Activated naive CD8-positive, alpha-beta T cell treated with anti-CD3 and anti-CD28 coated beads, Interleukin-2, amount 10 ng/mL, durations not matched to agents 7 days and 5 days (primary cell): ENCODE measurements at regions of chr14 and their contacts with region 1.

Region 1: DNA sequence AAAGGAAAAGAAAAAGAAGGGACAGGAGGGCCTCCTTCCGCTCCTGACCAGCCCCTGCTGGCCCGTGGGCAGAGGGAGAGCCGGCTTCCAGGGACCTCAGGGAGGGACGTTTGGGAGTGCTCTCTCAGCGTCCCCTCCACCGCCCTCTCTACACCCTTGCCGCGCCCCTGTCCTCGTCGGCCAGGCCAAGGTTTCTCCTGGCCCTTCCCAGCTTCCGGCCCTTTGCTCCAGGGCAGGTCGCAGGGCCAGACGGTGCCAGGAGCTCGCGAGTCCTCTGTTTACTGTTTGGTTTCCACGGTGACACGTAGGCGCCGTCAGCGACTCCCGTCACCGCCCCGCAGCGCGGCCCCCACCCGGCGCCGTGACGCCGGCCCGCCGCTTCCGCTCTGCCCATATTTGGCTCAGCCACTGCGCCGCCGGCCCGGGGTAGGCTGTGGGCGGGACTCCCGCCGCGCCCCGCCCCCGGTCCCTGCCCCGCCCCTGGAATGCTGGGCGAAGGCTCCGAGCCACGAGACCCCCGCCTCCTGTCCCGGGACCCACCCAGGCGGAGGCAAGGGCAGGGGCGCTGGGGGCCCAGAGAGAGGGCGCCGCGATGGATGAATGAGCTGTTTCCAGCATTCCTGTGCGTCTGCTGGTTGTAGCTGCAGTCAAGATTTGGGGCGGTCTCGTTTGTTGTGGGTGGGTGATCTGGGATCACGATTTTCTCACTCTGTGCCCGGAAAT is 15.5 kb downstream of the FOS start:
- DNase-seq: peak; percentile 97
- ATAC-seq: peak; percentile 85
- H3K4me3 Mint-ChIP-seq: peak overlapping the region; percentile 88
- H3K27ac Mint-ChIP-seq: peak overlapping the region; percentile 82
- H3K4me1 Mint-ChIP-seq: peaks cover 12% of the 10 kb centered on the region
- H3K27me3 Mint-ChIP-seq: peaks cover 18% of the 10 kb centered on the region

Region 2: DNA sequence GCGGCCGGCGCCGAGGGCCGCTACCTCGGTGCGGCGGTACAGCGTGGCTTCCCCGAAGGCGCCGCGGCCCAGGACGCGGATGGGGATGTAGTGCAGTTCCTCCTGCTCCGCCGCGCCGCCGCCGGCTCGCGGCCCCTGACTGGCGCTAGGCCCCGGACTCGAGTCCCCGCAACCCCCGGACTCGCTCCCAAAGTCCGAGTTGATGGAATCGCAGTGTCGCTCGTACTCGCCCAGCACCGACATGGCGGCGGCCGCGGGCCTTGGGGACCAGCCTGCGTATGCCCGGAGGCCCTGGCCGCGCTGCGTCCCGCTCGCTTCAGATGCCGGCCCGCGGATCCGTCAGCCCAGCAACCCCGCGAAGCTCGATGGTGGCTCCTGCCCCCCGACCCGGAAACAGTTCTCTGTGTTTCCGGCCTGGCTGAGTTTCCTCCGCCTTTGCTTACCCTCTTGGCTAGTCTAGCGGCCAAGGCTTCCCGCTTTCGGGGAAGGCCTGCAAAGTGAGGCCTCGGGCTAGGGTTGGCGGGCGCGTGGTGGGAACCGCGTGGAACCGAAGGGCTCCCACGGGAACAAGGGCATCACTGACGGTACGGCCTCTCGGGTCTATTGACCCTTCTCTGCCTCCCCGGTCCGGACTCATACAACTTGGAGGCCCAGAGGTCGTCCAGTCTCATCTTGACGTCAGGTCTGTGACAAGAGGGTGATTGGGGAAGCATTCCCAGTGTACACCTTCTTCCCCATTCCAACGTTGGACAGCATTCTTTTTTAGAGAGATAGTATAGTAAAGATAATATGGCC is 167.2 kb before region 1 on chr14 and contains the start of gene NEK9:
- POLR2A ChIA-PET with region 1: interaction called, 11 read pairs
- DNase-seq: peak; percentile 90
- ATAC-seq: peak; percentile 93
- H3K4me3 Mint-ChIP-seq: peak within 1 kb of the TSS; percentile 95
- H3K27ac Mint-ChIP-seq: peak within 1 kb of the TSS; percentile 97
- H3K4me1 Mint-ChIP-seq: peaks cover 34% of the 10 kb centered on the region
- H3K27me3 Mint-ChIP-seq: no peaks in the 10 kb centered on the region
- total RNA-seq, gene NEK9: 95.2 to 104 TPM

Region 3: DNA sequence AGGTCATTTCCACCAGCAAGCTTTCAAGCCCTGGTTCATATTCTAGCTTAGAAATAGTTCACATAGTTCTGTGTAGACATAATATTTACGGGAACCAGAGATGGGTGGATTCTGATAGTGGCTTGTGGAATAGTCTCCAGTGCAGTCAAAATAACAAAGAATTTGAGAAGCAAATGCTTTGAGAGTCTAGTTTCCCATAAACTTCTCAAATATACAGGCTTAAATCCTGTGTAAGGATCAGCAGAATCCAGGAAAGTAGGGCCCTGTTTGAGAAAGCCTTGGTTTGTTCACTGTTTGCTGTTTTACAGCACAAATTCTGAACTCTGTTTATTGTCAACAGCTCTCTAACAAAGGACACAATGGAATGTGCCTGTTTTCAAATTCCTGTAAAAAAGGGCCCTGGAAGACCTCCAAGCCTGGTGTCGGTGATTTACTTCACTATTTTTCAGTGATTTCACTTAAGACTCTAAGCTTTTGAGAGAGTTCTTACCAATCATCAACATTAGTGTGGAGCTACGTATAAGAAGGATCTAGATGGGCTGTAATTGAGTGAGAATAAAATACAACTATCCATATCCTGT is 26.9 kb before region 1 on chr14:
- POLR2A ChIA-PET with region 1: no interaction called
- DNase-seq: no peak
- ATAC-seq: no peak
- H3K4me3 Mint-ChIP-seq: no peak overlapping the region
- H3K27ac Mint-ChIP-seq: no peak overlapping the region
- H3K4me1 Mint-ChIP-seq: peaks cover 1% of the 10 kb centered on the region
- H3K27me3 Mint-ChIP-seq: peaks cover 51% of the 10 kb centered on the region

Region 4: GRCh38 chr14:75310295-75311111 is 16.4 kb after region 1 on chr14:
- POLR2A ChIA-PET with region 1: no interaction called
- DNase-seq: no peak
- ATAC-seq: no peak
- H3K4me3 Mint-ChIP-seq: no peak overlapping the region
- H3K27ac Mint-ChIP-seq: no peak overlapping the region
- H3K4me1 Mint-ChIP-seq: peaks cover 18% of the 10 kb centered on the region
- H3K27me3 Mint-ChIP-seq: peaks cover 9% of the 10 kb centered on the region

Region 5: DNA sequence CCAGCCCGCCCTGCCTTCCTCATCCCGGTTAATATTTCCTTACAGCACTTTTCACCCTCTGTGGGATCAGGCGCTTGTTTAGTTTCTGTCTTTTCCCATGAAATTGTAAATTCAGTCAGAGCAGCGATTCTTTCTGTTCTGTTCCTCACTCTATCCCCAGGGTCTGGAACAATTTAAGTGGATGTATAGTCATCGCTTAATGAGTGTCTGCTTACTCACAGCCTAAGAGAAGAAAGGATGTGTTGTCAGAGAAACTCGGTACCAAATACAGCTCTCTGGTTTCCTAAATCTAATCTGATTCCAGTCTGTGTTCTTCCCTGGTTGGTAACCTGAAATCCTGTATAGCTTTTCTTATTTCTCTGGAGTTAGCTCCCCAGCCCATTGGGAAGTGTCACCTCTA is 29.5 kb after region 1 on chr14:
- POLR2A ChIA-PET with region 1: no interaction called
- DNase-seq: no peak
- ATAC-seq: no peak
- H3K4me3 Mint-ChIP-seq: no peak overlapping the region
- H3K27ac Mint-ChIP-seq: no peak overlapping the region
- H3K4me1 Mint-ChIP-seq: no peaks in the 10 kb centered on the region
- H3K27me3 Mint-ChIP-seq: peaks cover 14% of the 10 kb centered on the region

Region 6: GRCh38 chr14:75340921-75341320 is 46.8 kb after region 1 on chr14:
- POLR2A ChIA-PET with region 1: no interaction called
- DNase-seq: no peak
- ATAC-seq: no peak
- H3K4me3 Mint-ChIP-seq: no peak overlapping the region
- H3K27ac Mint-ChIP-seq: no peak overlapping the region
- H3K4me1 Mint-ChIP-seq: no peaks in the 10 kb centered on the region
- H3K27me3 Mint-ChIP-seq: peaks cover 11% of the 10 kb centered on the region